Psoas muscle (tissue), 8 donors: ENCODE measurements at regions of chr3 and their contacts with region 1.

Region 1: GRCh38 chr3:136250226-136250902 is at the start of gene PCCB:
- DNase-seq: peak; percentile 94 to 97
- ATAC-seq: peak; percentile 97 to 98 (median 98)
- H3K4me3 ChIP-seq: peak within 1 kb of the TSS; percentile 73
- H3K27ac ChIP-seq: peak within 1 kb of the TSS; percentile 89
- H3K4me1 ChIP-seq: peaks cover 13% of the 10 kb centered on the region
- H3K27me3 ChIP-seq: no peaks in the 10 kb centered on the region
- CTCF ChIP-seq: peak; percentile 68
- total RNA-seq, gene PCCB: 36.4 to 60.4 (median 52.5) TPM

Region 2: GRCh38 chr3:135950941-135951340 is 299.4 kb before region 1 on chr3:
- intact Hi-C with region 1: no loop called
- DNase-seq: no peak
- ATAC-seq: no peak
- H3K4me3 ChIP-seq: no peak overlapping the region
- H3K27ac ChIP-seq: no peak overlapping the region
- H3K4me1 ChIP-seq: no peaks in the 10 kb centered on the region
- H3K27me3 ChIP-seq: no peaks in the 10 kb centered on the region
- CTCF ChIP-seq: no peak

Region 3: GRCh38 chr3:136075218-136075808 is 175.1 kb before region 1 on chr3:
- intact Hi-C with region 1: loop called (anchors 2 to 5 kb)
- DNase-seq: peak; percentile 57 to 69
- ATAC-seq: peak; percentile 84 to 88 (median 85)
- H3K4me3 ChIP-seq: peak overlapping the region; percentile 13
- H3K27ac ChIP-seq: peak overlapping the region; percentile 88
- H3K4me1 ChIP-seq: peaks cover 45% of the 10 kb centered on the region
- H3K27me3 ChIP-seq: no peaks in the 10 kb centered on the region
- CTCF ChIP-seq: peak; percentile 95

Region 4: GRCh38 chr3:136209921-136210320 is 40.4 kb before region 1 on chr3:
- intact Hi-C with region 1: loop called in 1 of 2 experiments (anchors 5 kb)
- DNase-seq: no peak
- ATAC-seq: no peak
- H3K4me3 ChIP-seq: no peak overlapping the region
- H3K27ac ChIP-seq: no peak overlapping the region
- H3K4me1 ChIP-seq: no peaks in the 10 kb centered on the region
- H3K27me3 ChIP-seq: no peaks in the 10 kb centered on the region
- CTCF ChIP-seq: no peak

Region 5: DNA sequence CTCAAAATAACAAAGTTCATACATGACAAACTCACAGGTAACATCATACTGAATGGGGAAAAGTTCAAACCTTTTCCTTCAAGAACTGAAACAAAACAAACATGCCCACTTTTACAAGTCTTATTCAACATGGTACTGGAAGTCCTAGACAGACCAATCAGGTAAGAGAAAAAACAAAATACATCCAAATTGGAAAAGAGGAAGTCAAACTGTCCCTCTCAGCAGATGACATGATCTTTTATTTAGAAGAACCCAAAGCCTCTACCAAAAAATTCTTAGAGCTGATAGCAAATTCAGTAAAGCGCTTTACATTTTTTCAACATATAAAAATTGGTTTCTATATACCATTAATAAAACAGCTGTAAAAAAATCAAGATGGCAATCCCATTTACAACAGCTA is 282.4 kb after region 1 on chr3:
- intact Hi-C with region 1: no loop called
- DNase-seq: no peak
- ATAC-seq: no peak
- H3K4me3 ChIP-seq: no peak overlapping the region
- H3K27ac ChIP-seq: no peak overlapping the region
- H3K4me1 ChIP-seq: no peaks in the 10 kb centered on the region
- H3K27me3 ChIP-seq: no peaks in the 10 kb centered on the region
- CTCF ChIP-seq: no peak